ENCODE measurements at regions of chr5 and their contacts with region 1.

Region 1: GRCh38 chr5:73564018-73564417 is 1.4 kb downstream of the ANKRA2 start:
- H3K4me3 ChIP-seq: peak overlapping the region; percentile 99
- H3K27ac ChIP-seq: no peak overlapping the region
- H3K4me1 ChIP-seq: peaks cover 11% of the 10 kb centered on the region; the same call in 1 of the 2 replicates
- CTCF ChIP-seq: no peak

Region 2: GRCh38 chr5:73250645-73251044 is 313.4 kb before region 1 on chr5:
- CTCF ChIA-PET with region 1: no interaction called
- POLR2A ChIA-PET with region 1: no interaction called
- H3K4me3 ChIP-seq: no peak overlapping the region
- H3K27ac ChIP-seq: no peak overlapping the region
- H3K4me1 ChIP-seq: no peaks in the 10 kb centered on the region
- CTCF ChIP-seq: no peak

Region 3: GRCh38 chr5:73540192-73540591 is 23.8 kb before region 1 on chr5:
- CTCF ChIA-PET with region 1: interaction called, 10 read pairs
- POLR2A ChIA-PET with region 1: no interaction called
- H3K4me3 ChIP-seq: no peak overlapping the region
- H3K27ac ChIP-seq: no peak overlapping the region
- H3K4me1 ChIP-seq: no peaks in the 10 kb centered on the region
- CTCF ChIP-seq: no peak

Region 4: DNA sequence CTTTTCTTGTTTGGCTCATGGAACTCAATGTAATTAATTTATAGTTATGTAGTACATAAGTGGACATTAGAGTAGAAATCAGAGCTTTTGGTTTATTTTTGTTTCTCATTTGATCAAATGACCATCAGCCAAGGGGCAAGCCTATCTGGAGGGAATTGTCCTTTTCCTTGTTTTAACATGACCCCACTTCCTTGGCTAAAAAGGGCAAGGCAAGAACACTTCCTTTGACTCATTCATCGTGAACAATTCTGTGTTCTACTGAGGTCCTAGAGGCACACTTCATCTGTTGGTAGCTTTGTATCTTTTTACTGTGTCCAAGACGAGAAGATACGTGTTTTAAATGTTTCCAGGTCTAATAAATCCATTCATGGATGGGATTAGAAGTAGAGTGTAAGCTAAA is 210.9 kb after region 1 on chr5:
- CTCF ChIA-PET with region 1: no interaction called
- POLR2A ChIA-PET with region 1: no interaction called
- H3K4me3 ChIP-seq: no peak overlapping the region
- H3K27ac ChIP-seq: no peak overlapping the region
- H3K4me1 ChIP-seq: no peaks in the 10 kb centered on the region
- CTCF ChIP-seq: no peak